Left ventricle myocardium inferior (tissue), 1 donor: ENCODE measurements at regions of chr21 and their contacts with region 1.

Region 1: GRCh38 chr21:36927719-36928117 is 38.8 kb downstream of the HLCS start:
- DNase-seq: peak; percentile 77
- H3K4me3 ChIP-seq: no peak overlapping the region
- H3K27ac ChIP-seq: no peak overlapping the region
- H3K4me1 ChIP-seq: peaks cover 13% of the 10 kb centered on the region
- H3K27me3 ChIP-seq: no peaks in the 10 kb centered on the region
- CTCF ChIP-seq: peak; percentile 97

Region 2: GRCh38 chr21:36504067-36505058 is 423.4 kb before region 1 on chr21:
- intact Hi-C with region 1: loop called (anchors 5 kb)
- DNase-seq: no peak
- H3K4me3 ChIP-seq: no peak overlapping the region
- H3K27ac ChIP-seq: no peak overlapping the region
- H3K4me1 ChIP-seq: no peaks in the 10 kb centered on the region
- H3K27me3 ChIP-seq: peaks cover 52% of the 10 kb centered on the region
- CTCF ChIP-seq: peak; percentile 96

Region 3: DNA sequence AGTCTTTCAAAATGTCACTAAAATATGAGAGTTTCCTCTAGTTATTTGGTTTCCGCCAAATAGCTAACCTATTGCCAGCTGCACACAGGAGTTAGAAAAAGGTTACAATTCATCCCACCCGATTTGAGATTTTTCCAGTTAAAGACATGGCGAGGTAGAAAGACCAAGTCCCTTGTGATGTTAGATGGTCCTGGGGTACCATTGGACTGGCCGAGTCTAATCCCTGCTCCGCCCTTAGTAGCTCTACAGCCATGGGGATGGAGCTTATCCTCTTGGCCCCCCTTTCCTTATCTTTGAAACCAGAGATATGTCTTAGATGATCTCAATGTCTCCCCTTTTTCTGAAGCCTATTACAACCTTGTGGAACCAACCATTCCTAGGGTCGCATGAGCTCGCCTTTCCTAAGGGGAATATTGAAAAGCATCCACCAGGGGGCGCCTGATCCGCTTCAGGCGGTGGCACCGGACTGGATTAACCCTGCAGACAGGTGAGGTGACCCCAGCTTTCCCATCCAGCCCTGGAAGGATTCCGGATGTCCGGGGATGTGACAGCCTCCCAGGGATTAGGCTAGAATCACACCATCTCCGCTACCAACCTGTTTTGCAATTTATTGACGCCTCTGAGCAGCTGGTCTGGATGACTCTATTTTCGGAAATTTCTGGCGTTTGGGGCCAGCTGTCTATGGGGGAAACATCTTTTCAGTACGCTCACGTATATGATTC is 297.1 kb before region 1 on chr21:
- intact Hi-C with region 1: loop called (anchors 5 kb)
- DNase-seq: peak; percentile 26
- H3K4me3 ChIP-seq: no peak overlapping the region
- H3K27ac ChIP-seq: no peak overlapping the region
- H3K4me1 ChIP-seq: no peaks in the 10 kb centered on the region
- H3K27me3 ChIP-seq: peaks cover 80% of the 10 kb centered on the region
- CTCF ChIP-seq: peak; percentile 78